Heart left ventricle (tissue), 16 donors: ENCODE measurements at regions of chr2 and their contacts with region 1.

Region 1: GRCh38 chr2:235106874-235107639 is 155.2 kb downstream of the SH3BP4 start:
- DNase-seq: peak; percentile 54 to 71 (median 67)
- ATAC-seq: peak; percentile 55 to 87 (median 74)
- H3K4me3 ChIP-seq: no peak overlapping the region
- H3K27ac ChIP-seq: no peak overlapping the region
- H3K4me1 ChIP-seq: peaks cover 0 to 13% (median 2%) of the 10 kb centered on the region in 12 donors
- H3K27me3 ChIP-seq: no peaks in the 10 kb centered on the region
- CTCF ChIP-seq: peak; percentile 41 to 84 (median 74)
- POLR2A ChIP-seq: no peak

Region 2: GRCh38 chr2:234620018-234620417 is 487.0 kb before region 1 on chr2:
- intact Hi-C with region 1: loop called in 1 of 10 experiments (anchors 10 kb)
- DNase-seq: no peak
- ATAC-seq: no peak
- H3K4me3 ChIP-seq: no peak overlapping the region
- H3K27ac ChIP-seq: no peak overlapping the region
- H3K4me1 ChIP-seq: peaks cover 0 to 3% (median 0%) of the 10 kb centered on the region in 12 donors
- H3K27me3 ChIP-seq: no peaks in the 10 kb centered on the region
- CTCF ChIP-seq: no peak
- POLR2A ChIP-seq: no peak